ENCODE measurements at regions of chr22 and their contacts with region 1.

Region 1: GRCh38 chr22:23767673-23768548 is at the start of gene CHCHD10:
- DNase-seq: peak; percentile 92
- H3K4me3 ChIP-seq: peak within 1 kb of the TSS; percentile 57 to 75 (median 66)
- H3K27ac ChIP-seq: peak within 1 kb of the TSS; percentile 85 to 89 (median 88)
- H3K4me1 ChIP-seq: peaks cover 0 to 84% (median 60%) of the 10 kb centered on the region in 4 donors
- H3K27me3 ChIP-seq: no peaks in the 10 kb centered on the region
- CTCF ChIP-seq: peak; percentile 73 to 92 (median 79)
- EP300 ChIP-seq: no peak
- POLR2A ChIP-seq: peak; percentile 18 to 65
- total RNA-seq, gene CHCHD10: 5.7 to 51.5 (median 29.1) TPM

Region 2: DNA sequence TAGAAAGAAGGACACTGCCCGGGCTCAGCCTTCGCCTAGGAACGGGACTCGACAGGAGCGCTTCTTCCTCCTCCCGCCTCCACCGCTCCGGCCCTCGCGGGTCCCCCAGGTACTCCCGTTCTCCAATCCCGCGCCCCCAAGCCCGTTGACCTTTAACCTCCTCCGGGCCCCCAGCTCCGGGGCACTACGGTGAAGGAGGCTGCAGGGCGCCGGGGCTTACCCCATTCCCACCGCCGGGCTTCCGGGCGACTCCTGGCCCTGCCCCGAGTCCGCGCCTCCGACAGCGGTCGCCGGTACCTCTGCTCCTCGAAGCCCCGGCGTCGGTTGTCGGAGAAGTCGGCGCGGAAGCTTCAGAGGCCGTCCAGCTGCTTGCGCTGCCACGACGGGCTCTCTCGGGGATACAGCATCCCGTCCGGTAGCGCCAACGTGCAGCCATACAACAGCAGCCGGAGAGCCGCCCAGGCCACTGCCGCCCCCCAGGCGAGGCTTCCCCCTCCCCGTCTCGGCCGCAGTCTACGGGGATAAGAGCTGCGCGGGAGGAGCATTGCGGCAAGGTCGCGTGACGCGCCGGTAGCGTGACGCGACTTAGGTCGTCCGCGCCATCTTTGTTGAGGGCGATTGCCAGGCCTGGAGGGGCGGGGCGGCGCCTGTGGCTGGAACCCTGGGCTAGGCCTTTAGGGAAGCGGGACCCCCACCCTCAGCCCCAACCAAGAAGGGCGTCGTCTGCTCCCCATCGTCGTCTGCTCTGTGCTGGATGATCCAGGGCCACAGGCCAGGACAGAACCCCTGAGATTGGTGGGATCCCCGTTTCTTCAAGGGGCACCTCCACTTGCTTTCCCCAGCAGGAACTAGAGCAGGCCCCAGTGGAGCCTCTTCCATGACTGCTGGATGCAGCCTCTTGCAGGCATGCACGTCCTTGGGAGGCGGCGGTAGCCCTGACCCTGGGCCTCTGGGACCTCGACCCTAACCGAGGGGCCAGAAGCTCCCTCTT is 50.8 kb before region 1 on chr22:
- intact Hi-C with region 1: loop called (anchors 5 kb)
- DNase-seq: peak; percentile 93
- H3K4me3 ChIP-seq: peak overlapping the region; percentile 68 to 89 (median 79)
- H3K27ac ChIP-seq: peak overlapping the region; percentile 70 to 81 (median 78)
- H3K4me1 ChIP-seq: peaks cover 0 to 21% (median 14%) of the 10 kb centered on the region in 4 donors
- H3K27me3 ChIP-seq: no peaks in the 10 kb centered on the region
- CTCF ChIP-seq: no peak
- EP300 ChIP-seq: no peak
- POLR2A ChIP-seq: peak; percentile 47 to 77

Region 3: GRCh38 chr22:23750714-23751440 is 17.0 kb before region 1 on chr22 and contains the start of gene ZNF70:
- intact Hi-C with region 1: loop called (anchors 2 kb)
- DNase-seq: peak; percentile 93
- H3K4me3 ChIP-seq: peak within 1 kb of the TSS; percentile 71 to 80 (median 78)
- H3K27ac ChIP-seq: peak within 1 kb of the TSS; percentile 88 to 94 (median 90)
- H3K4me1 ChIP-seq: peaks cover 0 to 20% (median 17%) of the 10 kb centered on the region in 4 donors
- H3K27me3 ChIP-seq: no peaks in the 10 kb centered on the region
- CTCF ChIP-seq: no peak
- EP300 ChIP-seq: no peak
- POLR2A ChIP-seq: peak; percentile 40 to 64
- total RNA-seq, gene ZNF70: 2.6 to 5.5 (median 3.0) TPM

Region 4: GRCh38 chr22:23786752-23787599 is 19.1 kb after region 1 on chr22 and contains the start of gene SMARCB1:
- intact Hi-C with region 1: loop called (anchors 2 kb)
- DNase-seq: peak; percentile 96
- H3K4me3 ChIP-seq: peak within 1 kb of the TSS; percentile 88 to 99 (median 97)
- H3K27ac ChIP-seq: peak within 1 kb of the TSS; percentile 99 to 100 (median 100)
- H3K4me1 ChIP-seq: peaks cover 0 to 54% (median 47%) of the 10 kb centered on the region in 4 donors
- H3K27me3 ChIP-seq: no peaks in the 10 kb centered on the region
- CTCF ChIP-seq: no peak
- EP300 ChIP-seq: no peak
- POLR2A ChIP-seq: peak in 1 of 2 donors; percentile 55
- total RNA-seq, gene SMARCB1: 25.0 to 85.7 (median 45.5) TPM

Region 5: GRCh38 chr22:23837906-23838680 is 70.2 kb after region 1 on chr22:
- intact Hi-C with region 1: loop called (anchors 2 kb)
- DNase-seq: no peak
- H3K4me3 ChIP-seq: peak overlapping the region in 3 of 4 donors; percentile 35 to 48 (median 41)
- H3K27ac ChIP-seq: no peak overlapping the region
- H3K4me1 ChIP-seq: peaks cover 0 to 26% (median 22%) of the 10 kb centered on the region in 4 donors
- H3K27me3 ChIP-seq: no peaks in the 10 kb centered on the region
- CTCF ChIP-seq: no peak
- EP300 ChIP-seq: no peak
- POLR2A ChIP-seq: no peak

Region 6: GRCh38 chr22:23849009-23850006 is 81.4 kb after region 1 on chr22:
- intact Hi-C with region 1: loop called (anchors 5 kb)
- DNase-seq: peak; percentile 87
- H3K4me3 ChIP-seq: peak overlapping the region in 1 of 4 donors; percentile 10
- H3K27ac ChIP-seq: no peak overlapping the region
- H3K4me1 ChIP-seq: peaks cover 0 to 14% (median 9%) of the 10 kb centered on the region in 4 donors
- H3K27me3 ChIP-seq: no peaks in the 10 kb centered on the region
- CTCF ChIP-seq: peak; percentile 91 to 95 (median 93)
- EP300 ChIP-seq: no peak
- POLR2A ChIP-seq: no peak